ENCODE measurements at regions of chr16 and their contacts with region 1.

Region 1: GRCh38 chr16:2226245-2226793 is 2.9 kb downstream of the E4F1 start:
- DNase-seq: no peak
- H3K27ac ChIP-seq: peak overlapping the region; percentile 90
- CTCF ChIP-seq: no peak

Region 2: GRCh38 chr16:2079991-2080390 is 146.3 kb before region 1 on chr16:
- CTCF ChIA-PET with region 1: no interaction called
- POLR2A ChIA-PET with region 1: interaction called, 13 read pairs
- DNase-seq: no peak
- H3K27ac ChIP-seq: no peak overlapping the region
- CTCF ChIP-seq: no peak

Region 3: DNA sequence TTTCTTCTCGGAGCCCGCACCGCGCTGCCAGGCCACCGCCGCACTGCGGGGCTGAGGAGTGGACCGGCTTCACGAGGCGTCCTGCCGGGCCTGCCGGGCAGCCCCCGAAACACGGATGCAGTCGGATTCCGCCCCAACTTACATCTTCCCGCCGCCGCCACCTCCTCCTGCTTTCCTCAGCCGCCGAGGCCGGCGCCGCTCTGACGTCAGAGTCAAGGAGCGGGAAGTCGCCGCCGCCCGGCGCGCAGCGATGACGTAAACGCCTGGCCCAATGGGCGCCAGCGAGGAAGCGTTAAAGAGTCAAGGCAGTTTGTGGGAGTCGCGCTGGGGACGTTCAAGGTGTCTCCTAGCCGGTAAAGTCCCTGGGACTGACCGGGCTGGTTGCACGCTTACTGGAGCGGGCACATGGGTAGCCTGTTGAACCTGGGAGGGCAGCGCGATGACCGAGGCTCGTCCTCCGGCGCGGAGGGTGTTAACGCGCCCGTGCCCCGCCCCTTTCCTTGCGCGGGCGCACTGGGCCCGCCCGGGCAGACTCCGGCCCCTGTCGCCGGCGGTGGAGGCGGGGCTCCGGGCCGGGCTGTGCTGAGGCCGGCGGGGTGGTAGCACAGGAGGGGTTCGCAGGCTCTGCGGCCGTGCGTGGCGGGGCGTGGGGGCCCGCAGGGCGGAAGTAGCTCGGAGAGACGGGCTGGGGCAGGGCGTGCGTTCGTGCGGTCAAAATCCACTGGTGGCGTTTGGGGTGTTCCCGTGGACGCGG is 41.8 kb after region 1 on chr16 and contains the start of gene RNPS1:
- CTCF ChIA-PET with region 1: no interaction called
- POLR2A ChIA-PET with region 1: no interaction called
- DNase-seq: peak; percentile 95
- H3K27ac ChIP-seq: peak within 1 kb of the TSS; percentile 97
- CTCF ChIP-seq: no peak